ENCODE measurements at regions of chr7 and their contacts with region 1.

Region 1: GRCh38 chr7:115135769-115136410 is 214.0 kb downstream of the MDFIC start:
- DNase-seq: peak; percentile 42
- H3K4me3 ChIP-seq: no peak overlapping the region
- H3K27ac ChIP-seq: no peak overlapping the region
- H3K4me1 ChIP-seq: peaks cover 4% of the 10 kb centered on the region
- H3K27me3 ChIP-seq: no peaks in the 10 kb centered on the region
- CTCF ChIP-seq: no peak
- POLR2A ChIP-seq: no peak

Region 2: DNA sequence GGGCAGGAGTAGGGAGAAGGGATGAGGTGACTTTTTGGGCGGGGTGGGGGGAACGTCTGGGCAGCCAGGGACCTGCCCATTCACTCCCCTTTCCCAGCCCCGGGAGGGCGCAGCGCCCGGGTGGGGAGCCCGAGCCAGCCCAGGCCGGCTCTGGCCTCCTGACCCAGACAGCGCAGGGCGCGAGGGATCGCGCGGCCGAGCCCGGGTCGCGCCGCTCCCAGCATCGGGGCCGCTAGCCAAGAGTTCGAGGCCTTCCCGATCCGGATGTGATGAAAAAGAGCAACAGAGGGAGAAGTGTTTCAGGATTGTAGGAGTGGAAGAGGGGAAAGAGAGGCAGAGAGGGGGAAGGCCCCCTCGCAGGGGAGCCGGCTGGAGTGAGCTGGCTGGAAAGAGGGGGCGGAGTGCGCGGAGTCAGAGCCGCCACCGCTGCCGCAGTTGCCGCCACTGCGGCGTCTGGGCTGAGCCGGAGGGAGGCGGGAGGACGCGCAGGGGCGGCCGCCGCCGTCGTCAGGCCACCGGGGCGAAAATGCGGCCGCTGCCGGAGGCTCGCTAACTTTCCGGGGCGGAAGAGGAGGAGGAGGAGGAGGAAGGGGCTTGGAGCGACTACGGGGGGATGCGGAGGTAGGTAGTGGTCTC is 213.8 kb before region 1 on chr7 and contains the start of gene MDFIC:
- CTCF ChIA-PET with region 1: no interaction called
- POLR2A ChIA-PET with region 1: no interaction called
- dilution Hi-C with region 1: no loop called
- intact Hi-C with region 1: loop called (anchors 1 kb)
- DNase-seq: peak; percentile 47
- H3K4me3 ChIP-seq: peak within 1 kb of the TSS; percentile 60 to 96 (median 73)
- H3K27ac ChIP-seq: peak within 1 kb of the TSS; percentile 58
- H3K4me1 ChIP-seq: peaks cover 3% of the 10 kb centered on the region
- H3K27me3 ChIP-seq: peaks cover 0 to 2% of the 10 kb centered on the region in 2 experiments
- CTCF ChIP-seq: no peak
- POLR2A ChIP-seq: peak; percentile 62
- total RNA-seq, gene MDFIC: 13.7 and 14.2 TPM in 2 replicates

Region 3: DNA sequence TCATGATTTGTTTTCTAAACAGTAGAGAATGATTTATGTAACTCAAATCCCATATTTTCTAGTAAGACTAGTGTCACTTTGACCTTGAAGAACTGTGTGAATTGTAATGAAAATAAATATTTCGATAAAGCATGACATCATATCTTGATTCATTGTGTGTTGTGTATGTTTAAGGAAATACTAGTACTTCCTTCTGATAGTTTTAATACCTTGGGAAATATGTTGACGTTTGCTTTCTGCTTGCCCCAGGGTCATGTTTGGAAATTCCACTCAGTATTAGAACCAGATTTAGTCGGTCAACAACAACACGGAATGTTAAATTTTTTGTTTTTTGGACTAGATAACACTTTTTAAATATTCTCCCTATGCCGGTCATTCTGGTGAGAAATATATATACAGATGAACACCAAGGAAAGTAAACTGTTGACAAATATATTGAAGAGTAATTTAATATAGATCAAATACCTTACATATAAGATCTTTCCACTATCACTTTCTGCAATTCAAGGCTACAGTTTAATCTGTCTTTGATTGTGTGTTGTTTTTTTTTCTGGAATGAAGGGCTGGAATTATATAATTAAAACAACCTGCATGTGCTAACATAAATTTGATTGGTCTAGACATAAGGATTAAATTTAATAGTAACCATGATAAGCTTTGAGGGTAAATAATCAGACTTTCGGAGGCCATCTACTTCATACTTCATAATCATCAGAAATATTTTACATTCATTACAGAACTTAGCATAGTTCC is 87.7 kb before region 1 on chr7:
- CTCF ChIA-PET with region 1: no interaction called
- POLR2A ChIA-PET with region 1: no interaction called
- dilution Hi-C with region 1: no loop called
- intact Hi-C with region 1: loop called (anchors 5 kb)
- DNase-seq: peak; percentile 88
- H3K4me3 ChIP-seq: no peak overlapping the region
- H3K27ac ChIP-seq: no peak overlapping the region
- H3K4me1 ChIP-seq: peaks cover 16% of the 10 kb centered on the region
- H3K27me3 ChIP-seq: peaks cover 23 to 75% of the 10 kb centered on the region in 2 experiments
- CTCF ChIP-seq: no peak
- POLR2A ChIP-seq: peak; percentile 33

Region 4: GRCh38 chr7:115087437-115087836 is 48.5 kb before region 1 on chr7:
- CTCF ChIA-PET with region 1: no interaction called
- POLR2A ChIA-PET with region 1: interaction called, 3 read pairs
- dilution Hi-C with region 1: no loop called
- intact Hi-C with region 1: loop called (anchors 5 kb)
- DNase-seq: peak; percentile 97
- H3K4me3 ChIP-seq: no peak overlapping the region
- H3K27ac ChIP-seq: peak overlapping the region; percentile 44
- H3K4me1 ChIP-seq: peaks cover 16% of the 10 kb centered on the region
- H3K27me3 ChIP-seq: no peaks in the 10 kb centered on the region
- CTCF ChIP-seq: no peak
- POLR2A ChIP-seq: no peak

Region 5: DNA sequence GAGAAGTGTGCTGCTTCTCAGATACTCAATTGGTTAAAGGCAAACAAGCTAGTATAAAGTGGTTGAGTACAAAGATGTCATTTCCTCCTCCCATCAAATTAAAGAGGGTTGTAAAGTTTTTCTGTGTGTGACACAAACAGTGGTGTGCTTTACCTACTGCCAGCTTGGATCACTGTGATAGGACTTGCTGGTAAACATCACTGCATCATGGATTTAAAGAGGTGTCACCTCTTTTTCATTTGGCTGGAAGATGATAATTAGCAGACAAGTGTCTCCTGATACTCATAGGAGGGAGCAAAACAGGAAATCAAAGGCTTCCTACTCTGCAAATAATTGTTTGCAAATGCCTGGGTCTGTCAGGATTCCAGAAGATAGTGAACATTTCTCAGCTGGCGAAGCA is 13.5 kb before region 1 on chr7:
- CTCF ChIA-PET with region 1: no interaction called
- POLR2A ChIA-PET with region 1: no interaction called
- dilution Hi-C with region 1: no loop called
- intact Hi-C with region 1: loop called (anchors 2 kb)
- DNase-seq: peak; percentile 33
- H3K4me3 ChIP-seq: no peak overlapping the region
- H3K27ac ChIP-seq: no peak overlapping the region
- H3K4me1 ChIP-seq: peaks cover 11% of the 10 kb centered on the region
- H3K27me3 ChIP-seq: no peaks in the 10 kb centered on the region
- CTCF ChIP-seq: no peak
- POLR2A ChIP-seq: no peak

Region 6: DNA sequence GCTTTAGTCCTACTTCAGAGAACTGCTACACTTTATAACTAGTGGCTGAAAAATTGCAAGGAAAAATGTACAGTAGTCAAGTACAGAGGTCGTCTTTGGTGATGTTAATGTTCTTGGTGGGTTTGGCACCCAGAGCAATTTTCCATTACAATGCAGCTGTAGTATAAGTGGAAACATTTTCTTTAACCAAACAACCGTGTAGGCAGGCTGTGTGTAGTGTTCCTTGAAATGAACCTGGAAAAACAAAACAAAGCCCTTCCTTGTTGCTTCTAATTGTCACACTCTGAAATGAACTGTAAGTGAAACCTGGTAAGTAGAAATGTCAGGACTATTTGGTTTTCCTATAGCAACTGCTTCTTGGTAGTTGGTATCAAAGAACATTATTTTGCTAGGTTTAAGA is 42.9 kb after region 1 on chr7:
- CTCF ChIA-PET with region 1: no interaction called
- POLR2A ChIA-PET with region 1: no interaction called
- dilution Hi-C with region 1: no loop called
- intact Hi-C with region 1: loop called (anchors 2 kb)
- DNase-seq: peak; percentile 32
- H3K4me3 ChIP-seq: no peak overlapping the region
- H3K27ac ChIP-seq: no peak overlapping the region
- H3K4me1 ChIP-seq: no peaks in the 10 kb centered on the region
- H3K27me3 ChIP-seq: no peaks in the 10 kb centered on the region
- CTCF ChIP-seq: no peak
- POLR2A ChIP-seq: no peak

Region 7: GRCh38 chr7:115208710-115209560 is 73.0 kb after region 1 on chr7:
- CTCF ChIA-PET with region 1: no interaction called
- POLR2A ChIA-PET with region 1: no interaction called
- dilution Hi-C with region 1: no loop called
- intact Hi-C with region 1: no loop called
- DNase-seq: no peak
- H3K4me3 ChIP-seq: no peak overlapping the region
- H3K27ac ChIP-seq: no peak overlapping the region
- H3K4me1 ChIP-seq: peaks cover 2% of the 10 kb centered on the region
- H3K27me3 ChIP-seq: peaks cover 0 to 3% of the 10 kb centered on the region in 2 experiments
- CTCF ChIP-seq: no peak
- POLR2A ChIP-seq: no peak